H1 (cell line): ENCODE measurements at regions of chr1 and their contacts with region 1.

Region 1: DNA sequence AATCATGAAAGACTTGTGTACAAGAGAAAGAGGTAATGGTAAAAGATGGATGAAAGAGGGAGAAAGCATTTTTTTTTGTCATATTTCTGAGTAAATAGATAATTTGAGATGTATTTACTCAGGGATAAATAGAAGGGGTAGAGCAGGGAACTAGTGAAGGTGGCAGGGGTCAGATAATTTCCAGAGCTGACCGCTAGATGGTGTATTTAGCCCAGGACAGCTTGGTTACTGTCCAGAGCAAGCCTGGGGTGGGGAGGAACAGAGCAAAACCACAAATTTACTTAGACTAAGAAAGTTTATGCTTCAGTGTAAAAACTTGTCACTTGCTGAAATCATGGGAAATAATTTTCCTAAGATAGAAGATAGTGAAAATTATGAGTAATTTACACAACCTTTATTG is 91.5 kb downstream of the XCL2 start:
- DNase-seq: peak in 1 of 2 experiments; percentile 54
- H3K4me3 ChIP-seq: no peak overlapping the region
- H3K27ac ChIP-seq: no peak overlapping the region
- H3K4me1 ChIP-seq: no peaks in the 10 kb centered on the region
- H3K27me3 ChIP-seq: no peaks in the 10 kb centered on the region
- CTCF ChIP-seq: peak; percentile 49 to 66 (median 59)
- EP300 ChIP-seq: no peak
- POLR2A ChIP-seq: no peak
- RAD21 ChIP-seq: peak; percentile 72 to 74

Region 2: DNA sequence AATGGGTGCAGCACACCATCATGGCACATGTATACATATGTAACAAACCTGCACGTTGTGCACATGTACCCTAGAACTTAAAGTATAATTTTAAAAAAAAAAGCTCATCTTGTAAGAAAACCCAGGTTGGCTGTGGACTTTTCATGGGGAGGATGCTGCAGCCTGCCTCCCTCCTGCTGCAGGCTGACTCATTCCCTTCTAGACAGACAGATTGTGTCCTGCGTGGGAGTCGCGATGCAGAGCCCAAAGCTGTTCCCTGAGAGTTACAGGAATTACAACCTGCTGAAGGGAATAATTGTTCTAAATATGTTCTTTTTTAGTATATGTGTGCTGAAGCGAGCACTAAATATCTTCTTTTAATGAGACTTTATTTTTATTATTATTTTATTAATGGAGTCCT is 78.5 kb before region 1 on chr1:
- CTCF ChIA-PET with region 1: no interaction called
- POLR2A ChIA-PET with region 1: no interaction called
- DNase-seq: no peak
- H3K4me3 ChIP-seq: no peak overlapping the region
- H3K27ac ChIP-seq: no peak overlapping the region
- H3K4me1 ChIP-seq: no peaks in the 10 kb centered on the region
- H3K27me3 ChIP-seq: no peaks in the 10 kb centered on the region
- CTCF ChIP-seq: no peak
- EP300 ChIP-seq: no peak
- POLR2A ChIP-seq: no peak
- RAD21 ChIP-seq: no peak

Region 3: GRCh38 chr1:168408536-168409242 is 43.6 kb before region 1 on chr1:
- CTCF ChIA-PET with region 1: no interaction called
- POLR2A ChIA-PET with region 1: no interaction called
- DNase-seq: no peak
- H3K4me3 ChIP-seq: no peak overlapping the region
- H3K27ac ChIP-seq: no peak overlapping the region
- H3K4me1 ChIP-seq: no peaks in the 10 kb centered on the region
- H3K27me3 ChIP-seq: no peaks in the 10 kb centered on the region
- CTCF ChIP-seq: no peak
- EP300 ChIP-seq: no peak
- POLR2A ChIP-seq: no peak
- RAD21 ChIP-seq: no peak

Region 4: DNA sequence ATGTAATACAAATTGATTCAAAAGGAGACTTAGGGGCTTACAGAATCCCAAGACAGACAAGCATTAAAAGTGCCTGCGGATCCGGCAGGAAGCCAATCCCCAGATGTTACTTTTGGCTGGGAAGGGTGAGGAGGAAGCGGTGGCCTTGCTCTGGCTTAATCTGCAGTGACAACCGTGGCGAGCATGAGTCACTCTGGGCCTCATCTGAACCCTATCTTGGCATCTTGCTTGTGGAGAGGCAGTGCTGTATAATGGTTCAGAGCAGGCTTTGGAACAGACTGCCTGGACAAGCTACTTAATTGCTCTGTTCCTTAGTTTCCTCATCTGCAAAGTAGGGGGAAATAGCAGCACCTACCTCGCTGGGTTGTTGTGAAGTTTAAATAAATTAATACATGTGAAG is 17.4 kb after region 1 on chr1:
- CTCF ChIA-PET with region 1: interaction called, 11 read pairs
- POLR2A ChIA-PET with region 1: no interaction called
- DNase-seq: no peak
- H3K4me3 ChIP-seq: no peak overlapping the region
- H3K27ac ChIP-seq: no peak overlapping the region
- H3K4me1 ChIP-seq: no peaks in the 10 kb centered on the region; a peak in 2 of 7 replicates
- H3K27me3 ChIP-seq: no peaks in the 10 kb centered on the region
- CTCF ChIP-seq: no peak
- EP300 ChIP-seq: no peak
- POLR2A ChIP-seq: no peak
- RAD21 ChIP-seq: no peak